CD4-positive, alpha-beta memory T cell (primary cell): ENCODE measurements at regions of chr6 and their contacts with region 1.

Region 1: DNA sequence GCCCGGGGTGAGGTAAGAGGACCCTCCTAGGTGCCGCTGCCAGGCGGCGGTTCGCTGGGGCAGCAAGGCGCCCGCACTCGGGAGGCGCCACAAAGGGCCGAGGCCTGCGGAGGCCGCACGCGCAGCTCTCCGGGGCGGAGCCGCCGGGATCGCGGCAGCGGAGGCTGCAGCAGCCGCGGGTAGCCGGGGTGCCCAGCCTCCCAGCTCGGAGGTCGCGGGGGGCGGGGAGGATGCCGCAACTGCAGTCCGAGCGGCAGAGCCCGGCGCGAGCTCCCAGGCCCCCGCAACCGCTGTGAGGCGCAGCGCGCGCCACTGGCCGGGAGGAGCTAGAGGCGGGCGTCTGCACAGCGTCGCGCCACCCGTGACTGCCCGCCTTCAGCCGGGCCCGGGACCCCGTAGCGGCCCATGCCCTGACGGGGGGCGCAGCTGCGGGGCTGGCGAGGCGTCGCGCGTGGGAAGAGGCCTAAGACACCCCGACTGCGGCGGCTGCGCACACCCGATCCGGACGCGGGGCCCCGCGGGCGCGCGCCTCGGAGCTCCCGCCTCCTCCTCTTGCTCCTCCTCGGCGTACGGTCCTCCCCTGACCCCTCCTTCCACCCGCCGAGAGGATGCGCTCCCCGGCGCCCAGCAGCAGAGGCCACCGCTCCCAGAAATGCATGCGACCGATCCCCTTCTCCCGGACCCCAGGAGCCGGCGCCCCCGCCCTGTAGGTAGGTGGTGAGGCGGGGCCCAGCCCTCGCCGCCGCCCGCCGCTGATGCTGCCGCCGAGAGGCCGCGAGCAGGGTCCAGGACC is at the start of gene NCOA7:
- DNase-seq: peak; percentile 80 to 84 (median 83)
- H3K4me3 ChIP-seq: peak within 1 kb of the TSS; percentile 78 to 79
- H3K4me3 Mint-ChIP-seq: peak within 1 kb of the TSS; percentile 93 to 96 (median 94)
- H3K27ac ChIP-seq: peak within 1 kb of the TSS; percentile 82
- H3K27ac Mint-ChIP-seq: peak within 1 kb of the TSS; percentile 97 to 99 (median 98)
- H3K4me1 ChIP-seq: peaks cover 58% of the 10 kb centered on the region
- H3K4me1 Mint-ChIP-seq: peaks cover 39 to 63% (median 51%) of the 10 kb centered on the region in 4 donors
- H3K27me3 ChIP-seq: no peaks in the 10 kb centered on the region
- H3K27me3 Mint-ChIP-seq: no peaks in the 10 kb centered on the region
- total RNA-seq, gene NCOA7: 73.6 to 75.1 TPM

Region 2: DNA sequence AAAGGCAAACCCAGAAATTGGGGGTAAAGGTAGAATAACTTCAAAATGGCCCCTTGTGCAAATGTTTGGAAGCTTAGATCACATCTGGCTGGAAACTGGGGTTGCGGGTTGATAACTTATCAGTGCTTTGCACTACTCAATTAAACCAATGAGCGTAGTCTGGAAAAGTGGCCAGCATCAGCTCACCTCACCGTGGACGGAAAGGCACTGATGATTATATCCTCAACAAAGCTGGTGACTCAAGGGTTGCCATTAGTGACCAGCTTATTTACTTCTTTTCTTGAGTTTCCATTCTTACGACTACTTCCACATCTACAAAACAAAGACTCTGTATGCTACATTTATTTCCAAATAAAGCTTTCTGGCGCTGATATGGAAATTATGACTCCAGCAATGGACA is 239.7 kb before region 1 on chr6:
- CTCF ChIA-PET with region 1: no interaction called
- POLR2A ChIA-PET with region 1: no interaction called
- intact Hi-C with region 1: no loop called
- DNase-seq: no peak
- H3K4me3 ChIP-seq: no peak overlapping the region
- H3K4me3 Mint-ChIP-seq: no peak overlapping the region
- H3K27ac ChIP-seq: no peak overlapping the region
- H3K27ac Mint-ChIP-seq: no peak overlapping the region
- H3K4me1 ChIP-seq: no peaks in the 10 kb centered on the region
- H3K4me1 Mint-ChIP-seq: no peaks in the 10 kb centered on the region
- H3K27me3 ChIP-seq: no peaks in the 10 kb centered on the region
- H3K27me3 Mint-ChIP-seq: peaks cover 3 to 5% of the 10 kb centered on the region in 2 donors

Region 3: DNA sequence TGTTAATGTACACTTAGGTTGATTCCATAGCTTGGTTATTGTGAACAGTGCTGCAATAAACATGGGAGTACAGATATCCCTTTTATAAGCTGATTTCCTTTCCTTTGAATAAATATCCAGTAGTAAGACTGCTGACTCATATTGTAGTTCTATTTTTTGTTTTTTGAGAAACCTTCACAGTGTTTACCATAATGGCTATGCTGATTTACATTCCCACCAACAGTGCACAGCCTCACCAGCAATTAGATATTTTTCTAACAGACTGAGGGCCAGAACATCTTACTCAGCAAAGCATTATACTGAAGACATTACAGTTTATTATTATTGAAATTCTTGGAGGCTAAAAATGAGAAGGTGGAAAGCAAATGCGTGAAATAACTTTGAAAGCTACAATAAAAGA is 228.4 kb before region 1 on chr6:
- CTCF ChIA-PET with region 1: no interaction called
- POLR2A ChIA-PET with region 1: no interaction called
- intact Hi-C with region 1: no loop called
- DNase-seq: no peak
- H3K4me3 ChIP-seq: no peak overlapping the region
- H3K4me3 Mint-ChIP-seq: no peak overlapping the region
- H3K27ac ChIP-seq: no peak overlapping the region
- H3K27ac Mint-ChIP-seq: no peak overlapping the region
- H3K4me1 ChIP-seq: no peaks in the 10 kb centered on the region
- H3K4me1 Mint-ChIP-seq: no peaks in the 10 kb centered on the region
- H3K27me3 ChIP-seq: no peaks in the 10 kb centered on the region
- H3K27me3 Mint-ChIP-seq: peaks cover 7 to 15% of the 10 kb centered on the region in 2 donors

Region 4: DNA sequence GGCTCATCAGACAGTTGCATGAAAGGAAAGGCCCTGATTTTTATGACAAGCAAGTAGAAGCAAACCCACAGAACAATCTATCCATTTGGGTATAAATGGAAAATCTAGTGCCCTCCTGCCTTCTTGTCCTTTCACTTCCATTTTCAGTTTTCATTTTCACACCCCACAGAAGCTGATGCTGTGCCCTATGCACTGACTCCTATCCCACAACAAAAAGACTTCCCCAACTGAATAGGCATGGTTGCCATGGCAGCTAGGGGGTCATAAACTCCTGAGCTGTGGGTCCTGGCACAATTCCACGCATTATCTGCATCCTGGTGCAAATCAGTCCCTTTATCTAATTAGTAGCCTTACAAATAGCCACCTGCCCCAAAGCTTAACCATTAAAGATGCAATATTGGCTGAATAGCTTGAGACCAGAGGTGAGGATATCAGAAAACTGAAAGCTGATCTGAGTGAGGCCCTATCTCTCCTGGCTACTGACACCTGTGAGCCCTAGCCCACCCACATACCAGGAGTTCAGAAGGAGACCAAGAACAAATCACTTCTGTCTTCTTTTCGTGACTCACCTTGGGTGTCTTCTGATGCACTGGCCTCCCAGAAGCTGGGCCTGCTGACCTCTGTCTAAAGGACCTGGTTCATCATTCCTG is 76.0 kb before region 1 on chr6:
- CTCF ChIA-PET with region 1: no interaction called
- POLR2A ChIA-PET with region 1: no interaction called
- intact Hi-C with region 1: no loop called
- DNase-seq: no peak
- H3K4me3 ChIP-seq: no peak overlapping the region
- H3K4me3 Mint-ChIP-seq: no peak overlapping the region
- H3K27ac ChIP-seq: no peak overlapping the region
- H3K27ac Mint-ChIP-seq: peak overlapping the region in 1 of 7 donors; percentile 29
- H3K4me1 ChIP-seq: no peaks in the 10 kb centered on the region
- H3K4me1 Mint-ChIP-seq: peaks cover 0 to 4% (median 0%) of the 10 kb centered on the region in 4 donors
- H3K27me3 ChIP-seq: no peaks in the 10 kb centered on the region
- H3K27me3 Mint-ChIP-seq: peaks cover 1 to 3% of the 10 kb centered on the region in 2 donors

Region 5: DNA sequence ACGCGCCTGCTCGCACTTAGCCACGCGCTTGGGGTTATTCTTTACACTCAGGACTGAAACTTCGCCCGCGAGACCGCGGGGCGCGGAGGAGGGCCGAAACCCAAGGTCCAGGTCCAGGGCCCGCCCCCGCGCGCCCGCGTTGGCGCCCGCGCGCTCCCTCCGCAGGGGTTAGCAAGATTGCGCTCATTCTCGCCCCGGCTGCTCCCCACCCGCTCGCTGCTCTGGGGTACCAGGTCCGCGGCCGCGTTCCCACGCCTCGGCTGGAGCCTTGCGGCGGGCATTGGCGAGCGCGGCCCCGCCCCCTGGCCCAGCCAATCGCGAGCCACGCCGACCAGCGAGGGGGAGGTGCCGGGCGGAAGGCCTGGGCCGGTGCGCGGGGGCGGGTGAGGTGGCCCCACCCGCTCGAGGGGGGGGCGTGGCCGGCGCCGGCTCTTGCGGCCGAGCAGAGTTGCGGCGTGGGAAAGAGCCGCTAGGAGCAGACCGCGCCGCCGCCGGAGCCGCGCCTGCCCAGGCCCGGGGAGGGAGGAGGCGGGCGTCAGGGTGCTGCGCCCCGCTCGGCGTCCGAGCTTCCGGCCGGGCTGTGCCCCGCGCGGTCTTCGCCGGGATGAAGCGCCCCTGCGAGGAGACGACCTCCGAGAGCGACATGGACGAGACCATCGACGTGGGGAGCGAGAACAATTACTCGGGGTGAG is 41.2 kb before region 1 on chr6 and contains the start of gene HEY2:
- CTCF ChIA-PET with region 1: interaction called, 3 read pairs
- POLR2A ChIA-PET with region 1: interaction called, 17 read pairs
- intact Hi-C with region 1: no loop called
- DNase-seq: peak; percentile 69 to 79 (median 75)
- H3K4me3 ChIP-seq: peak within 1 kb of the TSS; percentile 30 to 56
- H3K4me3 Mint-ChIP-seq: peak within 1 kb of the TSS; percentile 88 to 95 (median 91)
- H3K27ac ChIP-seq: no peak within 1 kb of the TSS
- H3K27ac Mint-ChIP-seq: peak within 1 kb of the TSS; percentile 57 to 92 (median 80)
- H3K4me1 ChIP-seq: peaks cover 41% of the 10 kb centered on the region
- H3K4me1 Mint-ChIP-seq: peaks cover 21 to 43% (median 27%) of the 10 kb centered on the region in 4 donors
- H3K27me3 ChIP-seq: peaks cover 57% of the 10 kb centered on the region
- H3K27me3 Mint-ChIP-seq: peaks cover 41 to 42% of the 10 kb centered on the region in 2 donors
- total RNA-seq, gene HEY2: 0.14 TPM in 1 of 2 experiments, not detected in the other

Region 6: GRCh38 chr6:125812394-125813292 is 22.1 kb after region 1 on chr6:
- CTCF ChIA-PET with region 1: interaction called, 9 read pairs
- POLR2A ChIA-PET with region 1: interaction called, 18 read pairs
- intact Hi-C with region 1: no loop called
- DNase-seq: no peak
- H3K4me3 ChIP-seq: no peak overlapping the region
- H3K4me3 Mint-ChIP-seq: peak overlapping the region in 1 of 8 donors; percentile 46
- H3K27ac ChIP-seq: no peak overlapping the region
- H3K27ac Mint-ChIP-seq: peak overlapping the region in 3 of 7 donors; percentile 9 to 82 (median 43)
- H3K4me1 ChIP-seq: peaks cover 54% of the 10 kb centered on the region
- H3K4me1 Mint-ChIP-seq: peaks cover 50 to 82% (median 70%) of the 10 kb centered on the region in 4 donors
- H3K27me3 ChIP-seq: no peaks in the 10 kb centered on the region
- H3K27me3 Mint-ChIP-seq: no peaks in the 10 kb centered on the region

Region 7: GRCh38 chr6:125850361-125850760 is 59.8 kb after region 1 on chr6:
- CTCF ChIA-PET with region 1: interaction called, 12 read pairs
- POLR2A ChIA-PET with region 1: interaction called, 23 read pairs
- intact Hi-C with region 1: no loop called
- DNase-seq: no peak
- H3K4me3 ChIP-seq: no peak overlapping the region
- H3K4me3 Mint-ChIP-seq: no peak overlapping the region
- H3K27ac ChIP-seq: no peak overlapping the region
- H3K27ac Mint-ChIP-seq: peak overlapping the region in 1 of 7 donors; percentile 2
- H3K4me1 ChIP-seq: peaks cover 3% of the 10 kb centered on the region
- H3K4me1 Mint-ChIP-seq: peaks cover 18 to 36% (median 22%) of the 10 kb centered on the region in 4 donors
- H3K27me3 ChIP-seq: no peaks in the 10 kb centered on the region
- H3K27me3 Mint-ChIP-seq: no peaks in the 10 kb centered on the region

Region 8: DNA sequence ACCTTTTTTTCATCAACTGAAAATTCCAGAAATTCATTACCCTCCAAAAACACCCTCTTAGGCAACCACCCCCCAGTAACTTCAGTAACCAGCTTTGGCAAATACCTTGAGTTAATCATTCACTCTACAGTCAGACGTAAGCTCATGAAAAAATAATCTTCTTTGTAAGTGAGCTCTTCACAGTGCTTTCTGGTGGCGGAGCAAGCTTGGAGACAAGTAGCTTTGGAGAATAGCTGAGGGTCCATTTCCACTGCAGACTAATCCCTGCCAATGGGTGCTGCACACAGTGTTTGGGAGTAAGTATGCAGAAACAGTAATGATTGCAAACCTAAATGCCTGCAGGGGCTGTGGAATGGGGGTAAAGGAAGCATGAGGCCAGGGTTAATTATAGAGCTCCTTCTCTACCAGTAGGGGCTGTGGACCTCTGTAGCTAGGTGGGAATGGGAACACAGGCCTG is 109.2 kb after region 1 on chr6:
- CTCF ChIA-PET with region 1: interaction called, 50 read pairs
- POLR2A ChIA-PET with region 1: interaction called, 16 read pairs
- intact Hi-C with region 1: no loop called
- DNase-seq: no peak
- H3K4me3 ChIP-seq: no peak overlapping the region
- H3K4me3 Mint-ChIP-seq: no peak overlapping the region
- H3K27ac ChIP-seq: no peak overlapping the region
- H3K27ac Mint-ChIP-seq: peak overlapping the region in 1 of 7 donors; percentile 1
- H3K4me1 ChIP-seq: peaks cover 10% of the 10 kb centered on the region
- H3K4me1 Mint-ChIP-seq: peaks cover 7 to 25% (median 12%) of the 10 kb centered on the region in 4 donors
- H3K27me3 ChIP-seq: no peaks in the 10 kb centered on the region
- H3K27me3 Mint-ChIP-seq: no peaks in the 10 kb centered on the region

Region 9: DNA sequence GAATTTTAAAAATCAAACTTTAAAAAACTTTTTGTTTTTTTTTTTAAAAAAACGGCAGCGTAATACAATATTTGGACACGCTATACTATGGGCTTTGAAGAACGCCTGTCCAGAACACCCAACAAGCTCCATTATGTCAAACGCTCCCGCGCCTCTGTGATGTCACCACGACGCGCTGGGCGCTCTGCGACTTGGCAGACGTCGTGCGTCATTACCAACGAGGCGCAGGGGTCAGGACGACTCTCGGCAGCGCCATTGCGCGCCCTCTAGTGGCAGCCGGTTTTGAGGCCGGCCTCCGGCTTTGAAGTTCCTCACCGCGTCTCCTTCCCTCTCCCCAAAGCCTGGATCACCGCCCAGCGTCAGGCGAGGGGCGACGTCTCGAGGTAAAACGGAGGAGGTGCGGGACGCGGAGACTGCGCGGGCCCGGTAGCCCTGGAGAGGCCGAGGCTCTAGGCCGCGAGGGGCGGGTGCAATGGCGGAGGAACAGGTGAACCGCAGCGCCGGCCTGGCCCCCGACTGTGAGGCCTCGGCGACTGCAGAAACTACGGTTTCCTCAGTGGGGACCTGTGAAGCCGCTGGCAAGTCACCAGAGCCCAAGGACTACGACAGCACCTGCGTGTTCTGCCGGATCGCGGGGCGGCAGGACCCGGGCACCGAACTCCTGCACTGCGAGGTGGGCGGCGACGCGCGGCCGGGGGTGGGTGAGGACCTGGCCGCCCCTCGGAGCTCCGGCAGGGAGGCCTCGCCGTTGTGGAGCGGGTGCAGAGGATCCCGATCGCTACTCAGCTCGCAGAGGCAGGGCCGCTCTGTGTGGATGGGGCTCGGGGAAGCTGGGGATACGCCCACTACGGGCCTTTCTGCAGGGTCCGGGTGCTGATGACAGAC is 166.2 kb after region 1 on chr6 and contains the start of gene HINT3:
- CTCF ChIA-PET with region 1: interaction called, 118 read pairs
- POLR2A ChIA-PET with region 1: interaction called, 133 read pairs
- intact Hi-C with region 1: loop called (anchors 1 kb)
- DNase-seq: peak; percentile 96 to 98 (median 97)
- H3K4me3 ChIP-seq: peak within 1 kb of the TSS; percentile 60 to 94
- H3K4me3 Mint-ChIP-seq: peak within 1 kb of the TSS in 2 of 8 donors; percentile 66 to 67
- H3K27ac ChIP-seq: peak within 1 kb of the TSS; percentile 95
- H3K27ac Mint-ChIP-seq: no peak within 1 kb of the TSS
- H3K4me1 ChIP-seq: peaks cover 44% of the 10 kb centered on the region
- H3K4me1 Mint-ChIP-seq: peaks cover 3 to 25% (median 7%) of the 10 kb centered on the region in 4 donors
- H3K27me3 ChIP-seq: no peaks in the 10 kb centered on the region
- H3K27me3 Mint-ChIP-seq: no peaks in the 10 kb centered on the region
- total RNA-seq, gene HINT3: 10.6 to 12.7 TPM

Region 10: DNA sequence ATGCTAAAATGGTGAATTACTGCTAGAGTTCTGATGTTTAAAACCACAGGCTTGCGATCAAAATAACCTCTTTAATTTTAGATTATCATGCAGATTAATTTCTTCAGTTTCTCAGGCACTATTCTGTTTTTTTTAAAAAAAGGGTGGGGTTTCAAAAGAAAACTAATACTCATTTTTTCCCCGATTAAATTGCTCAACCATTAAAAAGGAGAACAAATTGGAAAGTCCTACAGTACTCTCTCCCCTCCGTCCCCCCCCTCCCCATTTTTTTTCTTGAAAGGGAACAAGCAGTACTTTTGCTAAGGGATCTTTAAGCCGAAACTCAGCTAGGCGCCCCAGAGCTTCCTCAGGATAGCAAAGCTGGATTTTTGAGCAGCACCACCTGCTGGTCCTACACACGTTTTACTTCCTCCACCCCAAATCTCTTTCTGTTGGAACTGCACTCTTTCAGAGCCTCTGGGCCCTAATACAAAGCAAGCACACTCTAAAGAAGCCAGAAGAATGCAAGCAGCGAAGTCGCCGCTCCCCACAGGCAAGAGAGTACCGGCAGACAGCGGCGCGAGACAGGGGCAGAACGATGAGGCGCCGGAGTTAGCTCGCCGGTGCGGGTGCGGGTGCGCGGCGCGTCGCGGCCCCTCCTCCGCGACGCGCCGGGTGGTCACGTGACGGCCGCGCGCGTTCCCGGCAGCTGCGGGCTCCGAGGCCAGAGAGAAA is 1475.8 kb after region 1 on chr6 and contains the start of gene RNF146:
- CTCF ChIA-PET with region 1: no interaction called
- POLR2A ChIA-PET with region 1: interaction called, 15 read pairs
- intact Hi-C with region 1: no loop called
- DNase-seq: peak; percentile 76 to 83 (median 77)
- H3K4me3 ChIP-seq: peak within 1 kb of the TSS; percentile 71 to 94
- H3K4me3 Mint-ChIP-seq: peak within 1 kb of the TSS; percentile 97 to 100 (median 100)
- H3K27ac ChIP-seq: peak within 1 kb of the TSS; percentile 94
- H3K27ac Mint-ChIP-seq: peak within 1 kb of the TSS; percentile 89 to 100 (median 99)
- H3K4me1 ChIP-seq: peaks cover 23% of the 10 kb centered on the region
- H3K4me1 Mint-ChIP-seq: peaks cover 25 to 42% (median 35%) of the 10 kb centered on the region in 4 donors
- H3K27me3 ChIP-seq: no peaks in the 10 kb centered on the region
- H3K27me3 Mint-ChIP-seq: peaks cover 0 to 2% of the 10 kb centered on the region in 2 donors
- total RNA-seq, gene RNF146: 36.4 to 39.9 TPM